Activated CD4-positive, alpha-beta memory T cell treated with anti-CD3 and anti-CD28 coated beads for 36 hours (primary cell): ENCODE measurements at regions of chr18 and their contacts with region 1.

Region 1: DNA sequence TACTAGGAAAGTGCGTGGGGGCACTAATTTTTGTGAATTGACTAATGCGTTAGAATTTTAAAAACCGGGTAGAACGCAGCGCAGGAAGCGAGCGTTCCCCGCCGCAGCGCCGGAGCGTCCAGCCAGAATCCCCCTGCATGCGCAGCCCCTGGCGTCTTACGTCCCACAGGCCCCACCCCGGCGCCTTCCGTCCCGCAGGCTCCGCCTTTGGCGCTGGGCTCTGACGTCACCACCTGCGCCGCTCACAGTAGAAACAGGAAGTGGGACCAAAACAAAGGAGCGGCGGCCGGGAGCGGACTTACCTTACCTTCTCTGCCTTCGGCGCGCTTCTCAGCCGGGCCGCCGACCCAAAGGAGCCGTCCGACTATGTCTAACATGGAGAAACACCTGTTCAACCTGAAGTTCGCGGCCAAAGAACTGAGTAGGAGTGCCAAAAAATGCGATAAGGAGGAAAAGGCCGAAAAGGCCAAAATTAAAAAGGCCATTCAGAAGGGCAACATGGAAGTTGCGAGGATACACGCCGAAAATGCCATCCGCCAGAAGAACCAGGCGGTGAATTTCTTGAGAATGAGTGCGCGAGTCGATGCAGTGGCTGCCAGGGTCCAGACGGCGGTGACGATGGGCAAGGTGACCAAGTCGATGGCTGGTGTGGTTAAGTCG is at the start of gene CHMP1B:
- DNase-seq: peak; percentile 98
- H3K4me3 Mint-ChIP-seq: peak within 1 kb of the TSS; percentile 100
- H3K27ac Mint-ChIP-seq: peak within 1 kb of the TSS; percentile 95
- H3K4me1 Mint-ChIP-seq: peaks cover 33% of the 10 kb centered on the region
- H3K27me3 Mint-ChIP-seq: no peaks in the 10 kb centered on the region
- total RNA-seq, gene CHMP1B: 21.2 to 22.0 TPM

Region 2: DNA sequence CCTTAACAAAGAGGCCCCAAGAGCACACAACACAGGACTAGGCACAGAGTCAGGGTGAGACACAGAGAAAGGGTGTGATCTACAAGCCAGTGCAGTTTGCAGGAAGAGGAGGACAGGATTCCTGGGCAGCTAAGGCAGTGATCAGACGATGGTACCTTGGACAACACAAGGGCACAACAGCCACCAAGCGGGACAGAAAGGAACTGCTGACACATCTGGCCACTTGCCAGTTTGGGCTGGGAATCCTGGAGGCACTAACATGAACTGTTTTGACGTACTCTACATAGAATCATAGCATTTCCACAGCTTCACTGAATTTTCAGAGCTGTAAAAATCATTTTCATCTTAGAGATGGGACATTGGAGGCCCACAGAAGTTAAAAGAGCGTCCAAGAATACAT is 463.4 kb before region 1 on chr18:
- CTCF ChIA-PET with region 1: no interaction called
- POLR2A ChIA-PET with region 1: no interaction called
- intact Hi-C with region 1: no loop called
- DNase-seq: no peak
- H3K4me3 Mint-ChIP-seq: no peak overlapping the region
- H3K27ac Mint-ChIP-seq: no peak overlapping the region
- H3K4me1 Mint-ChIP-seq: no peaks in the 10 kb centered on the region
- H3K27me3 Mint-ChIP-seq: no peaks in the 10 kb centered on the region

Region 3: GRCh38 chr18:11908182-11909060 is 57.1 kb after region 1 on chr18 and contains the start of gene MPPE1:
- CTCF ChIA-PET with region 1: no interaction called
- POLR2A ChIA-PET with region 1: interaction called, 3 read pairs
- intact Hi-C with region 1: loop called (anchors 1 kb)
- DNase-seq: peak; percentile 91
- H3K4me3 Mint-ChIP-seq: peak within 1 kb of the TSS; percentile 92
- H3K27ac Mint-ChIP-seq: peak within 1 kb of the TSS; percentile 90
- H3K4me1 Mint-ChIP-seq: peaks cover 22% of the 10 kb centered on the region
- H3K27me3 Mint-ChIP-seq: no peaks in the 10 kb centered on the region
- total RNA-seq, gene MPPE1: 34.0 to 35.4 TPM

Region 4: GRCh38 chr18:11947214-11948191 is 96.2 kb after region 1 on chr18:
- CTCF ChIA-PET with region 1: no interaction called
- POLR2A ChIA-PET with region 1: no interaction called
- intact Hi-C with region 1: loop called (anchors 1 kb)
- DNase-seq: peak; percentile 76
- H3K4me3 Mint-ChIP-seq: peak overlapping the region; percentile 67
- H3K27ac Mint-ChIP-seq: peak overlapping the region; percentile 58
- H3K4me1 Mint-ChIP-seq: peaks cover 8% of the 10 kb centered on the region
- H3K27me3 Mint-ChIP-seq: peaks cover 4% of the 10 kb centered on the region

Region 5: GRCh38 chr18:12384261-12384660 is 533.0 kb after region 1 on chr18:
- CTCF ChIA-PET with region 1: no interaction called
- POLR2A ChIA-PET with region 1: no interaction called
- intact Hi-C with region 1: no loop called
- DNase-seq: no peak
- H3K4me3 Mint-ChIP-seq: no peak overlapping the region
- H3K27ac Mint-ChIP-seq: no peak overlapping the region
- H3K4me1 Mint-ChIP-seq: no peaks in the 10 kb centered on the region
- H3K27me3 Mint-ChIP-seq: no peaks in the 10 kb centered on the region